Transverse colon (tissue), 4 donors: ENCODE measurements at regions of chrX and their contacts with region 1.

Region 1: DNA sequence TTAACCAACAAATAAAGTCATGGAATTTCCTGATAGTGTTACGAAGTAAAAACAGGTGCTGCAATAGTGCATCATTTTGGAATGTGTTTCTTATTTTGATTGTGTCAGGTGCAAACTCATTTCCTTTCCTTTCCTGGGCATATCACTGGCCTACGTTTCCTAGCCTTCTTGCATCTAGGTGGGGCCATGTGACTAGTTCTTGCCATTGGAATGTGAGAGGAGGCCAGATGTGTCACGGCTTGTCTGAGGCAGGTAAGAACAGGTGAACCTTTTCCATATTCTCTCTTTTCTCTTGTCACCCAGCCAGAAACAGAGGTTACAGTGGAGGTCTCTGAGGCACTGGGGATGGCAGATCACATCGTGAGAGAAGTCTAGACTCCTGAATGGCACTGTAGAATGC is 868.0 kb downstream of the RPA4 start:
- DNase-seq: no peak
- H3K4me3 ChIP-seq: no peak overlapping the region
- H3K27ac ChIP-seq: no peak overlapping the region
- H3K4me1 ChIP-seq: no peaks in the 10 kb centered on the region
- H3K27me3 ChIP-seq: no peaks in the 10 kb centered on the region
- CTCF ChIP-seq: no peak
- EP300 ChIP-seq: no peak
- POLR2A ChIP-seq: no peak

Region 2: GRCh38 chrX:96453139-96453538 is 1298.6 kb before region 1 on chrX:
- in situ Hi-C with region 1: no loop called
- intact Hi-C with region 1: no loop called
- DNase-seq: no peak
- H3K4me3 ChIP-seq: no peak overlapping the region
- H3K27ac ChIP-seq: no peak overlapping the region
- H3K4me1 ChIP-seq: no peaks in the 10 kb centered on the region
- H3K27me3 ChIP-seq: no peaks in the 10 kb centered on the region
- CTCF ChIP-seq: no peak
- EP300 ChIP-seq: no peak
- POLR2A ChIP-seq: no peak

Region 3: GRCh38 chrX:97728215-97728614 is 23.5 kb before region 1 on chrX:
- in situ Hi-C with region 1: no loop called
- intact Hi-C with region 1: loop called (anchors 1 kb)
- DNase-seq: no peak
- H3K4me3 ChIP-seq: no peak overlapping the region
- H3K27ac ChIP-seq: no peak overlapping the region
- H3K4me1 ChIP-seq: no peaks in the 10 kb centered on the region
- H3K27me3 ChIP-seq: no peaks in the 10 kb centered on the region
- CTCF ChIP-seq: no peak
- EP300 ChIP-seq: no peak
- POLR2A ChIP-seq: no peak